ENCODE measurements at regions of chr6 and their contacts with region 1.

Region 1: DNA sequence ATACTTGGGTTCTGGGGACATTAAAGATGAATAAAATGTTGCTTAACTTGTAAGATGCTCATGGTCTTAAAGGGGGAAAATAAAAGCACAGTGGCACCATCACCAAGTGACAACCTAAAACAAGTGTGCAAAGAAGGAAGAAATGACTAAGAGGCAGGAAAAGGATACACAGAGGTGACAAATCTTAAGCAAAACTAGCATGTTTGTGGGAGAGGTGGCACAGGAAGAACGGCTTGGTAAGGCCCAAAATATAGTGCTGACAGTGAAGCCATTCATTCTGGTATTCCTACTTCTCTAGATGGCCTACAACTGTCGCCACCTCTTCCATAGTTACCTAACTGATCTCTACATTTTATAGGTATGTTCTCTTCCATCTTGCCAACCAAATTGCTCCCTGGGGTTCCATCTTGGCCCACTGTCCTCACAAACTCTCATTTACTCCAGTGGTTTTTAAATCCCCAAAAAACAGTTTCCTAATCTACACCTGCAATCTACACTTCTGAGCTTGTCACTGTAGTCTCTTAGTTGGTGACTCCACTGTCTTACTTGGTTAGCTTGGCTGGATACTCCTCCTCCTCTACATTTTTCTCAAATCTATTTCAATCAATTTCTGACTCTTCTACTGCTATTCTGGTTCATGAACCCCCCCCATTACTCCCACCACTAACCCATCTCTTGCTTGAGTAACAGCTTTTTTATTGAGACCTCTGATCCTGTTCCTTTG is 33.5 kb downstream of the FAM8A1 start:
- DNase-seq: no peak
- H3K4me3 ChIP-seq: no peak overlapping the region
- H3K27ac ChIP-seq: no peak overlapping the region
- H3K4me1 ChIP-seq: peaks cover 17% of the 10 kb centered on the region
- CTCF ChIP-seq: no peak

Region 2: DNA sequence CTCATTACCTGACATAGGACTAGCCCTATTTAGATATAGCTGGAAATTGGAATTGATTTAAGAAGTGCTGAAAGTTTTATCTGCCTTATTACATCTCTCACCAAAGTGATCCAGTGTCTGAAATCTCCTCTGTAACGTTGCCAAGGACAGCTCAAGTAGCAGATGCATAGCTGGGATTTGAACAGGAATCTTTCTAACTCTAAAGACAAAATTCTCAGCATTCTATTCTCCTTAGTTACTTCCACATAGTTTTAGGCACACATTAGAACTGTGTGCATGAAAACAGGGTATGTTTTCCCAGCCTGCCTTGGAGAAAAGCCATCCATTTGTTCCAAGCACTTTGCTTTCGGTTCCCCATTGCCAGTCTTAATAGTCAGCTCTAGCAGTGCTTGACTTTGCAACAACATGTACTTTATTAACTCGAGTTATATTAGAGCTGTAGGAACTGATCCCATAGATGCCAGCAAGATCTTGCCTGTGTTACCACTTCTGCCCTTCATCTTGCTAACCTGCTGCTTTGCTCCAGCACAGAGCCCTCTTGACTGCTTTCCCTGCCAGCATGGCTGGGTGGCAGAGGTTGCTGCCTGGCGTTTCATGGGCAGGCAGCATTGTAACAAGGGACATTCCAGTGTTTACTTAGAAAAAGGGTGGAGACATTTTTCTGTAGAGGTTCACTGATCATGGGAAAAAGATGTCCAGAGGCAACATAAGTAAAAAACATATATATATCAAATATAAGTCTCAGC is 587.9 kb before region 1 on chr6:
- CTCF ChIA-PET with region 1: no interaction called
- POLR2A ChIA-PET with region 1: no interaction called
- intact Hi-C with region 1: no loop called
- DNase-seq: no peak
- H3K4me3 ChIP-seq: no peak overlapping the region
- H3K27ac ChIP-seq: no peak overlapping the region
- H3K4me1 ChIP-seq: no peaks in the 10 kb centered on the region
- CTCF ChIP-seq: no peak

Region 3: DNA sequence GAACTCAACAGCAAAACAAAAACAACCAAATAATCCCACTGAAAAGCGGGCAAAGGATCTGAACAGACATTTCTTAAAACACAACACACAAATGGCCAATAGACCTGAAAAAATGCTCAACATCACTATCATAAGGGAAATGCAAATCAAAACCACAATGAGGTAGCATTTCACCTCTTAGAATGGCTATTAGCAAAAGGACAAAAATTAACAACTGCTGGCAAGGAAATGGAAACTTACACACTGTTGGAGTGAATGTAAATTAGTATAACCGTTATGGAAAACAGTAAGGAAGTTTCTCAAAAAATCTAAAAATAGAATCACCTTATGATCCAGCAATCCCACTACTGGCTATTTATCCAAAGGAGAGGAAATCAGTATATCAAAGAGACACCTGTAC is 12.6 kb before region 1 on chr6:
- CTCF ChIA-PET with region 1: no interaction called
- POLR2A ChIA-PET with region 1: interaction called, 10 read pairs
- intact Hi-C with region 1: no loop called
- DNase-seq: peak; percentile 24
- H3K4me3 ChIP-seq: no peak overlapping the region
- H3K27ac ChIP-seq: peak overlapping the region; percentile 52
- H3K4me1 ChIP-seq: peaks cover 22% of the 10 kb centered on the region
- CTCF ChIP-seq: no peak

Region 4: GRCh38 chr6:17700421-17701416 is 67.1 kb after region 1 on chr6:
- CTCF ChIA-PET with region 1: interaction called, 3 read pairs
- POLR2A ChIA-PET with region 1: interaction called, 10 read pairs
- intact Hi-C with region 1: no loop called
- DNase-seq: no peak
- H3K4me3 ChIP-seq: no peak overlapping the region
- H3K27ac ChIP-seq: peak overlapping the region; percentile 28
- H3K4me1 ChIP-seq: peaks cover 39% of the 10 kb centered on the region
- CTCF ChIP-seq: no peak